Tibial artery (tissue), 4 donors: ENCODE measurements at regions of chr1 and their contacts with region 1.

Region 1: DNA sequence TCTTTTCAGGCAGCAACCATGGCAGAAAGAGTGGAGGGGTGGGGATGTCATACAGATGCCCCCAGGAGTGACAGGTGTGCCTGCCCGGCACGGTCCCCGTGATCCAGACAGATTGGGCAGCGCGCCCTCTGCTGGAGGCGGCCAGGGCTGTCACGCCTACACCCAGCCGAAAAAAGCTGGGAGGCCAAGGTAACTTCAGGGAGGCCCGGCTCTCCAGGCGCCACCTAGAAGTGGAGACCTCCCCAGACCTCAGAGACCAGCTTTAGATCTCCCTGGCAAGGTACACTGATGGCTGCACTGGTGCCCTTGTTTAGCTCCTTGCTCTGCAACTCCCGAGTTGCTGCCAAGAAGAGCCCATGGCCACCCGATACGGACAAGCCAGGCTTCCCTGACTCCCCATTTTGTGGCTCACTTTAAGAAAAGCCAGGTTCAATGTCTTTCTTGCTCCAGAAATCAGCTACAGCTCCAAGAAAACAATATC is 6.6 kb downstream of the GOLT1A start:
- DNase-seq: peak in 1 of 2 donors; percentile 45
- H3K4me3 ChIP-seq: no peak overlapping the region
- H3K27ac ChIP-seq: no peak overlapping the region
- H3K4me1 ChIP-seq: peaks cover 0 to 5% (median 2%) of the 10 kb centered on the region in 4 donors
- H3K27me3 ChIP-seq: peaks cover 0 to 38% of the 10 kb centered on the region in 2 donors
- CTCF ChIP-seq: peak; percentile 79 to 81

Region 2: GRCh38 chr1:204162231-204163074 is 44.7 kb before region 1 on chr1:
- intact Hi-C with region 1: loop called (anchors 5 kb)
- DNase-seq: peak; percentile 67 to 82
- H3K4me3 ChIP-seq: no peak overlapping the region
- H3K27ac ChIP-seq: no peak overlapping the region
- H3K4me1 ChIP-seq: no peaks in the 10 kb centered on the region
- H3K27me3 ChIP-seq: peaks cover 0 to 54% of the 10 kb centered on the region in 2 donors
- CTCF ChIP-seq: peak; percentile 96 to 100